GM12878 (cell line): ENCODE measurements at regions of chr3 and their contacts with region 1.

Region 1: DNA sequence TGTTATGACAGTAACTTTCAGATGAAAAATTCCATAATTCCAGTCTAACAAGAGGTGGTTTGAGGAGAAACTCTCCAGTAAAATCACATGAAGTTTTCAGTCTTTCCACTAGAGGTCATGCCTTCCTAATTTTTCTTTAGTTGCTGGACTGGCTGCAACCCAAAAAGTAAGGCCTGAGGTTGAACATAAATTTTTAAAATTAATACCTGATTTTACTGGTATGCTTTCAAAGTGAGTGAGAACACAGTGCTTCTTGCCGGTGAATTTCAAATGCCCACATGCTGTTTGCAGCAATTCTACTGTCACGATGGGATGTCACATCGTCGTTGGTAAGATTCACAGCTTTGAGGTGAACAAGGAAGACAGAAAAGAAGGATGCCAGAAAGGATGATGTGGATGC is 89.0 kb upstream of the FGF12 start:
- DNase-seq: no peak
- ATAC-seq: 0 out of 3 replicates have a peak, but pooled peaks have one; percentile 7
- H3K4me3 ChIP-seq: no peak overlapping the region
- H3K27ac ChIP-seq: no peak overlapping the region
- H3K4me1 ChIP-seq: peaks cover 30% of the 10 kb centered on the region
- H3K27me3 ChIP-seq: no peaks in the 10 kb centered on the region
- CTCF ChIP-seq: peak; percentile 48 to 75 (median 61); a peak in 5 of 6 replicates
- EP300 ChIP-seq: no peak
- POLR2A ChIP-seq: no peak
- RAD21 ChIP-seq: peak; percentile 94

Region 2: DNA sequence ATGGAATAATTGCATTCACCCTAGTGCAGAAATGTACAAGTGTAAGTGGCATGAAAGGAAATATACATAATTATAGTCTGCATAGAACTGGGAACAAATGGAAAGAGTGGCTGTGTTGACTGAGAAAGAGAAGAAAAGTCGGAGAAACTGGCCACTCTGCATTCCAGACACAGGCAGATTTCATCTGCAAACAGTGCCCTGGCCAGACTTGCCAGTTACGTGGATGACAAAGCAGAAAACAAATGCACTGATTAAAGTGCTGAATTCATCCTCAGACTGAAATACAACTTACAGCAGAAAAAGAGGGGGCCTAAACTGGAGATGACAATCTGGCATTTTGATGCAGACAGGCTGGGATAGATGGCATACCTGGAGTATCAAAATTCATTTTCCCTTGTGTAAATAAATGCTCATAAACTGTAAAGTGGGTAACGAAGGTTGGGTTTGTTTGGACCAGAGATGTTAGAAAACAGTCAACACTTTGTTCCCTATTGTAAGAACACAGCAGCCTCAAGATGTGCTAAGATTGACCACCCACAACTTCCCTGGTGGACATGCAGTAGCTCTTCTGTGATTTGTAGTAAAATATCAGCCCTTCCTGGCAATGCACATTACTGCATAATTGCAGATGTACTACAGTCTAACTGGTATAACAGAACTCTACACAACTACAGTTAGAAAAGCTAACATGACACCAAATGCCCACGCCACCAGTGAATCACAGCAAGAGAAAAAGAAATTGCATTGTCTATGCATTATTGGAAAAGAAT is 218.6 kb before region 1 on chr3:
- CTCF ChIA-PET with region 1: no interaction called
- POLR2A ChIA-PET with region 1: no interaction called
- RAD21 ChIA-PET with region 1: no interaction called
- SMC1A ChIA-PET with region 1: no interaction called
- in situ Hi-C with region 1: no loop called
- intact Hi-C with region 1: no loop called
- DNase-seq: no peak
- ATAC-seq: no peak
- H3K4me3 ChIP-seq: no peak overlapping the region
- H3K27ac ChIP-seq: no peak overlapping the region
- H3K4me1 ChIP-seq: no peaks in the 10 kb centered on the region
- H3K27me3 ChIP-seq: no peaks in the 10 kb centered on the region
- CTCF ChIP-seq: no peak
- EP300 ChIP-seq: no peak
- POLR2A ChIP-seq: no peak
- RAD21 ChIP-seq: no peak

Region 3: GRCh38 chr3:192831111-192831644 is 14.8 kb after region 1 on chr3:
- CTCF ChIA-PET with region 1: interaction called, 22 read pairs
- POLR2A ChIA-PET with region 1: interaction called, 13 read pairs
- RAD21 ChIA-PET with region 1: interaction called, 10 read pairs
- SMC1A ChIA-PET with region 1: interaction called, 38 read pairs
- in situ Hi-C with region 1: no loop called
- intact Hi-C with region 1: no loop called
- DNase-seq: no peak
- ATAC-seq: peak; percentile 53
- H3K4me3 ChIP-seq: peak overlapping the region; percentile 28; the same call in 1 of the 2 replicates
- H3K27ac ChIP-seq: peak overlapping the region; percentile 80
- H3K4me1 ChIP-seq: peaks cover 18% of the 10 kb centered on the region
- H3K27me3 ChIP-seq: no peaks in the 10 kb centered on the region
- CTCF ChIP-seq: no peak
- EP300 ChIP-seq: no peak
- POLR2A ChIP-seq: no peak
- RAD21 ChIP-seq: no peak

Region 4: GRCh38 chr3:192879336-192880106 is 63.2 kb after region 1 on chr3:
- CTCF ChIA-PET with region 1: interaction called, 14 read pairs
- POLR2A ChIA-PET with region 1: no interaction called
- RAD21 ChIA-PET with region 1: interaction called, 14 read pairs
- SMC1A ChIA-PET with region 1: interaction called, 14 read pairs
- in situ Hi-C with region 1: no loop called
- intact Hi-C with region 1: no loop called
- DNase-seq: no peak
- ATAC-seq: no peak
- H3K4me3 ChIP-seq: no peak overlapping the region
- H3K27ac ChIP-seq: no peak overlapping the region
- H3K4me1 ChIP-seq: 0 out of 2 replicates have a peak, but pooled peaks cover 3% of the 10 kb centered on the region
- H3K27me3 ChIP-seq: no peaks in the 10 kb centered on the region
- CTCF ChIP-seq: no peak
- EP300 ChIP-seq: no peak
- POLR2A ChIP-seq: no peak
- RAD21 ChIP-seq: no peak

Region 5: GRCh38 chr3:192906949-192907348 is 90.6 kb after region 1 on chr3:
- CTCF ChIA-PET with region 1: interaction called, 20 read pairs
- POLR2A ChIA-PET with region 1: interaction called, 3 read pairs
- RAD21 ChIA-PET with region 1: interaction called, 6 read pairs
- SMC1A ChIA-PET with region 1: interaction called, 16 read pairs
- in situ Hi-C with region 1: loop called (anchors 5 kb)
- intact Hi-C with region 1: no loop called
- DNase-seq: no peak
- ATAC-seq: peak; percentile 38
- H3K4me3 ChIP-seq: no peak overlapping the region
- H3K27ac ChIP-seq: no peak overlapping the region
- H3K4me1 ChIP-seq: peaks cover 3% of the 10 kb centered on the region
- H3K27me3 ChIP-seq: no peaks in the 10 kb centered on the region
- CTCF ChIP-seq: no peak
- EP300 ChIP-seq: no peak
- POLR2A ChIP-seq: no peak
- RAD21 ChIP-seq: no peak

Region 6: GRCh38 chr3:193016437-193016901 is 200.1 kb after region 1 on chr3:
- CTCF ChIA-PET with region 1: interaction called, 3 read pairs
- POLR2A ChIA-PET with region 1: no interaction called
- RAD21 ChIA-PET with region 1: no interaction called
- SMC1A ChIA-PET with region 1: interaction called, 10 read pairs
- in situ Hi-C with region 1: no loop called
- intact Hi-C with region 1: no loop called
- DNase-seq: no peak
- ATAC-seq: no peak
- H3K4me3 ChIP-seq: no peak overlapping the region
- H3K27ac ChIP-seq: no peak overlapping the region
- H3K4me1 ChIP-seq: no peaks in the 10 kb centered on the region
- H3K27me3 ChIP-seq: no peaks in the 10 kb centered on the region
- CTCF ChIP-seq: no peak
- EP300 ChIP-seq: no peak
- POLR2A ChIP-seq: no peak
- RAD21 ChIP-seq: no peak

Region 7: DNA sequence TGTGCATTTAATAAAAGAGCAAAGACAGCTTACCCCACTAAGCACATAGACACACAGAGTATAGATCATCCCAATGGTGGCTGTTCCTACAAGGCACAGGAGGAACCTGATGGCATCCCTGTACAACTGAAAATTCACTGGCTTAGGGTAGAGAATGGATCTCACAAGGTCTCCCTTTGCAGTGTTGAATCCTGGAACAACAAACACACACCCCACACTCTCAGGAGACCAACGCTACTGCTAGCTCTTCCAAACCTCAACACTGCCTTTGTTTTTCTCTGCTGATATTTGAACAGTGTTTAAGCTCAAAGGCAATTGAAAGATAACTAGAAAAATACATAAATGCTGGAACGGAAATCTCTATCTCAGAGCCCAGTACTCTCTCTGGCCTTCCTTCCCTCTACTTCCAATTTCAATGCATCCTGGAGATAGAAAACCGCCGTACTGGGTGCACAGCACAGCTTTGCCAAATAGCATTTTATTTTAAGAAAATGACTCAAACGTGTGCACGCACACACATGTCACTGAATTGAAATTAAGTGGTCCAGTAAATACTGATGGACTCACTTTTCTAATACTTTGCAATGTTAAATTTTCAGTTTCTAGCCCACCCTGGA is 649.7 kb after region 1 on chr3:
- CTCF ChIA-PET with region 1: no interaction called
- POLR2A ChIA-PET with region 1: no interaction called
- RAD21 ChIA-PET with region 1: no interaction called
- SMC1A ChIA-PET with region 1: no interaction called
- in situ Hi-C with region 1: no loop called
- intact Hi-C with region 1: loop called (anchors 5 kb)
- DNase-seq: no peak
- ATAC-seq: no peak
- H3K4me3 ChIP-seq: no peak overlapping the region
- H3K27ac ChIP-seq: no peak overlapping the region
- H3K4me1 ChIP-seq: no peaks in the 10 kb centered on the region
- H3K27me3 ChIP-seq: no peaks in the 10 kb centered on the region
- CTCF ChIP-seq: no peak
- EP300 ChIP-seq: no peak
- POLR2A ChIP-seq: no peak
- RAD21 ChIP-seq: no peak